ENCODE measurements at regions of chr6 and their contacts with region 1.

Region 1: GRCh38 chr6:169950558-169950957 is 199.1 kb downstream of the ERMARD start:
- DNase-seq: peak; percentile 56
- ATAC-seq: peak; percentile 69
- H3K4me3 Mint-ChIP-seq: no peak overlapping the region
- H3K27ac Mint-ChIP-seq: no peak overlapping the region
- H3K4me1 Mint-ChIP-seq: peaks cover 14% of the 10 kb centered on the region
- H3K27me3 Mint-ChIP-seq: peaks cover 15% of the 10 kb centered on the region

Region 2: GRCh38 chr6:169729961-169730360 is 220.6 kb before region 1 on chr6:
- CTCF ChIA-PET with region 1: no interaction called
- POLR2A ChIA-PET with region 1: no interaction called
- DNase-seq: no peak
- ATAC-seq: no peak
- H3K4me3 Mint-ChIP-seq: no peak overlapping the region
- H3K27ac Mint-ChIP-seq: no peak overlapping the region
- H3K4me1 Mint-ChIP-seq: peaks cover 16% of the 10 kb centered on the region
- H3K27me3 Mint-ChIP-seq: peaks cover 34% of the 10 kb centered on the region

Region 3: DNA sequence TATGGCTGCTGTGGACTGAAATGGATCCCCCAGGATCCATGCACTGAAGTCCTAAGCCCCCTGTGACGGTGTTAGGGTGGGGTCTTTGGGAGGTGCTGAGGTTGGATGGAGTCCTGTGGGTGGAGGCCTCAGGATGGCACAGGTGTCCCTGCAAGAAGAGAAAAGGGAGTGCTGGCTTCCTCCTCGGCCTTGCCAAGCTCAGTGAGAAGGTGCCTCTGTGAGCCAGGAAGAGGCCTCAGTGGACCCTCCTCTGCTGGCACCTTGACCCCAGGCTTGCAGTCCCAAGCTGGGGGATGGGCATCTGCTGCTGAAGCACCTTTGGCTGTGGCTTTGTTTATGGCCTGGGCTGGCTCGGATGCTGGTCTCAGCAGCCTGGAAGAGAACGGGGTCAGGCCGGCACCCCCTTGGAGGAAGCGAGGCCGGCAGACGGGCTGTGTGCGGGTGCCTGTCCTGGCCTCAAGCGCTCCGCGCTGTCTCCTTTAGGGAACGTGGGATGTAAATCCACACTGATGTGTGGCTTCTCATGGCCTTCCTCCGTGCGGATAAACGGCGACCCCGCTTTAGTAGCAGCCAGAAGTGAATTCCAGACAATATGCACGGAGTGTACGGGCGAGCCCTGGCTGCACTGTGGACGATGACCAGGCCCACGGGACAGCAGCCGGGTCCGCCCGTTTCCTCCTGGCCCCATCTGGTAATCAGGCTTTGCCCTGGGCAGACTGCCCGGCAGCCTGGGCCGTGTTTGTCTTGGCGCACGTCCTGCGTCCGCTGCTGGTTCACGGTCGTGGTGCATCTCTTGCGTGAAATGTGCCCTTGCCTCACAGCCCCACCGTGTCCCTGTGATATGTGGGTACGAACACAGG is 16.5 kb before region 1 on chr6:
- CTCF ChIA-PET with region 1: no interaction called
- POLR2A ChIA-PET with region 1: no interaction called
- DNase-seq: no peak
- ATAC-seq: no peak
- H3K4me3 Mint-ChIP-seq: no peak overlapping the region
- H3K27ac Mint-ChIP-seq: no peak overlapping the region
- H3K4me1 Mint-ChIP-seq: no peaks in the 10 kb centered on the region
- H3K27me3 Mint-ChIP-seq: peaks cover 5% of the 10 kb centered on the region

Region 4: GRCh38 chr6:170291271-170292110 is 340.9 kb after region 1 on chr6:
- CTCF ChIA-PET with region 1: interaction called, 15 read pairs
- POLR2A ChIA-PET with region 1: no interaction called
- DNase-seq: peak; percentile 66
- ATAC-seq: peak; percentile 38
- H3K4me3 Mint-ChIP-seq: peak overlapping the region; percentile 69
- H3K27ac Mint-ChIP-seq: peak overlapping the region; percentile 64
- H3K4me1 Mint-ChIP-seq: peaks cover 55% of the 10 kb centered on the region
- H3K27me3 Mint-ChIP-seq: peaks cover 47% of the 10 kb centered on the region